HepG2 (cell line): ENCODE measurements at regions of chr6 and their contacts with region 1.

Region 1: GRCh38 chr6:27838058-27838944 is 73.9 kb downstream of the OR2B2 start:
- DNase-seq: peak; percentile 100
- ATAC-seq: peak; percentile 87
- H3K4me3 ChIP-seq: peak overlapping the region; percentile 79 to 84 (median 83)
- H3K27ac ChIP-seq: peak overlapping the region; percentile 92
- H3K4me1 ChIP-seq: peaks cover 34% of the 10 kb centered on the region
- H3K27me3 ChIP-seq: no peaks in the 10 kb centered on the region; a peak in 1 of 5 replicates
- CTCF ChIP-seq: no peak
- EP300 ChIP-seq: 0 out of 4 replicates have a peak, but pooled peaks of 1 of the 2 experiments have one; percentile 6
- POLR2A ChIP-seq: peak; percentile 82 to 99
- RAD21 ChIP-seq: no peak; the same call in 1 of the 2 replicates

Region 2: GRCh38 chr6:26204332-26205165 is 1633.8 kb before region 1 on chr6:
- CTCF ChIA-PET with region 1: no interaction called
- POLR2A ChIA-PET with region 1: interaction called, 12 read pairs
- in situ Hi-C with region 1: loop called (anchors 10 kb)
- intact Hi-C with region 1: loop called (anchors 10 kb)
- DNase-seq: peak; percentile 98
- ATAC-seq: peak; percentile 75
- H3K4me3 ChIP-seq: peak overlapping the region; percentile 62 to 95 (median 77)
- H3K27ac ChIP-seq: peak overlapping the region; percentile 87
- H3K4me1 ChIP-seq: peaks cover 36% of the 10 kb centered on the region
- H3K27me3 ChIP-seq: no peaks in the 10 kb centered on the region; a peak in 1 of 5 replicates
- CTCF ChIP-seq: peak; percentile 53
- EP300 ChIP-seq: peak in 1 of 2 experiments; percentile 89; a peak in 3 of 4 replicates
- POLR2A ChIP-seq: peak; percentile 98 to 99
- RAD21 ChIP-seq: no peak; the same call in 1 of the 2 replicates

Region 3: GRCh38 chr6:27374824-27375612 is 463.3 kb before region 1 on chr6:
- CTCF ChIA-PET with region 1: no interaction called
- POLR2A ChIA-PET with region 1: no interaction called
- in situ Hi-C with region 1: no loop called
- intact Hi-C with region 1: no loop called
- DNase-seq: peak; percentile 31
- ATAC-seq: peak; percentile 96
- H3K4me3 ChIP-seq: peak overlapping the region; percentile 57 to 69 (median 59)
- H3K27ac ChIP-seq: no peak overlapping the region
- H3K4me1 ChIP-seq: peaks cover 16% of the 10 kb centered on the region; the same call in 1 of the 2 replicates
- H3K27me3 ChIP-seq: peaks cover 0 to 8% of the 10 kb centered on the region in 2 experiments
- CTCF ChIP-seq: no peak
- EP300 ChIP-seq: no peak
- POLR2A ChIP-seq: no peak
- RAD21 ChIP-seq: no peak

Region 4: DNA sequence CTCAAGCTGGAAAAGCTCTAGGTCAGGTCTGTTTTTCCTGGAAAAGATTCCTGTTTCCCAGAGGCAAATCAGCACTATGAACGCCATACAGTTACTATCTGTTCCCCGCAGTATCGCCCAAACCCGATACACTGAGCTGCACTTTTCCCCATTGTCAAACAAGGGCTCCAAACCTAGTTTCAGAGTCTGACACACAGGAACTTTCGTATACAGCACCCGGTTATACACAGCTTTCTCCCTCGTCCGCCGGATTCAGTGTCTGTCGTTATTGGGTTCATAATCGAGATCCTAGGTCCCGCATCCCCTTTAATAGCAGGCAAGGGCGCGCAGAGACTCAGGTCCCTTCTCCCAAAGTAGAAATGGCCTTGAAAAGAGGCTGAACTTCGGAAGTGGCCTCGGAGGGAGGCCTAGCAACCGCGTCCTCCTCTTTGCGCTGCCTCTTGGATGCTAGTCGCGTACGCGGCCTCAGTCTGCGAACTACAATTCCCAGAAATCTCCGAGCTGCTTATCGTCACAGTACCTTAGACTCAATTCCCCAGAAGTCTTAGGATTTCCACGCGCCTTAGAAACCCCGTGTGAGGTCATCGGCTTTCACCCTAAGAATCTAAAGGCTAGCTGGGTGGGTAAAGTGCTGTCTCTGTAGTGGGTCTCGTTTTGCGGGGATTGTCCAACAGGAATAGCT is 415.5 kb before region 1 on chr6:
- CTCF ChIA-PET with region 1: no interaction called
- POLR2A ChIA-PET with region 1: no interaction called
- in situ Hi-C with region 1: no loop called
- intact Hi-C with region 1: no loop called
- DNase-seq: no peak
- ATAC-seq: no peak
- H3K4me3 ChIP-seq: no peak overlapping the region
- H3K27ac ChIP-seq: no peak overlapping the region
- H3K4me1 ChIP-seq: no peaks in the 10 kb centered on the region
- H3K27me3 ChIP-seq: peaks cover 2 to 6% of the 10 kb centered on the region in 2 experiments; a peak in 1 of 5 replicates
- CTCF ChIP-seq: no peak
- EP300 ChIP-seq: no peak
- POLR2A ChIP-seq: no peak
- RAD21 ChIP-seq: no peak

Region 5: DNA sequence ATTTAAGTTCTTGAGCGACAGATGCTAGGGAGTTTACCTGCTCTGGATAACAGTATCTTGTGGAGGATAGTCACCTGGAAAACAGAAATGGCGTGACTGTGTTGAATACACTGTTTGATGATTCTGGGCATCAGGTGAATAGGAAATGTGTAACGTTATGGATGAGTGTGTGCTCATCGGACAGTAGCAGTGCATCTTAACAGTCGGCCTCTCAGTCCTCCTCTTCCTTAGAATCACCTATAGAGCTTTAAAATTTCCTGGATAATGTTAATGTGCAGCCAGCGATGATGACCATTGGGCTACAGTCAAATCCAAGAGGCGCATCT is 143.8 kb before region 1 on chr6:
- CTCF ChIA-PET with region 1: no interaction called
- POLR2A ChIA-PET with region 1: no interaction called
- in situ Hi-C with region 1: no loop called
- intact Hi-C with region 1: no loop called
- DNase-seq: no peak
- ATAC-seq: no peak; the same call in 1 of the 3 replicates
- H3K4me3 ChIP-seq: peak overlapping the region; percentile 61 to 93 (median 90)
- H3K27ac ChIP-seq: peak overlapping the region; percentile 71
- H3K4me1 ChIP-seq: peaks cover 27% of the 10 kb centered on the region
- H3K27me3 ChIP-seq: no peaks in the 10 kb centered on the region; a peak in 1 of 5 replicates
- CTCF ChIP-seq: no peak
- EP300 ChIP-seq: no peak
- POLR2A ChIP-seq: no peak
- RAD21 ChIP-seq: no peak

Region 6: GRCh38 chr6:27825025-27825793 is 13.1 kb before region 1 on chr6:
- CTCF ChIA-PET with region 1: no interaction called
- POLR2A ChIA-PET with region 1: interaction called, 80 read pairs
- in situ Hi-C with region 1: no loop called
- intact Hi-C with region 1: no loop called
- DNase-seq: no peak
- ATAC-seq: peak; percentile 11; the same call in 2 of the 3 replicates
- H3K4me3 ChIP-seq: peak overlapping the region; percentile 66 to 88 (median 75)
- H3K27ac ChIP-seq: peak overlapping the region; percentile 78
- H3K4me1 ChIP-seq: peaks cover 33% of the 10 kb centered on the region
- H3K27me3 ChIP-seq: no peaks in the 10 kb centered on the region; a peak in 1 of 5 replicates
- CTCF ChIP-seq: no peak
- EP300 ChIP-seq: no peak
- POLR2A ChIP-seq: no peak
- RAD21 ChIP-seq: no peak

Region 7: DNA sequence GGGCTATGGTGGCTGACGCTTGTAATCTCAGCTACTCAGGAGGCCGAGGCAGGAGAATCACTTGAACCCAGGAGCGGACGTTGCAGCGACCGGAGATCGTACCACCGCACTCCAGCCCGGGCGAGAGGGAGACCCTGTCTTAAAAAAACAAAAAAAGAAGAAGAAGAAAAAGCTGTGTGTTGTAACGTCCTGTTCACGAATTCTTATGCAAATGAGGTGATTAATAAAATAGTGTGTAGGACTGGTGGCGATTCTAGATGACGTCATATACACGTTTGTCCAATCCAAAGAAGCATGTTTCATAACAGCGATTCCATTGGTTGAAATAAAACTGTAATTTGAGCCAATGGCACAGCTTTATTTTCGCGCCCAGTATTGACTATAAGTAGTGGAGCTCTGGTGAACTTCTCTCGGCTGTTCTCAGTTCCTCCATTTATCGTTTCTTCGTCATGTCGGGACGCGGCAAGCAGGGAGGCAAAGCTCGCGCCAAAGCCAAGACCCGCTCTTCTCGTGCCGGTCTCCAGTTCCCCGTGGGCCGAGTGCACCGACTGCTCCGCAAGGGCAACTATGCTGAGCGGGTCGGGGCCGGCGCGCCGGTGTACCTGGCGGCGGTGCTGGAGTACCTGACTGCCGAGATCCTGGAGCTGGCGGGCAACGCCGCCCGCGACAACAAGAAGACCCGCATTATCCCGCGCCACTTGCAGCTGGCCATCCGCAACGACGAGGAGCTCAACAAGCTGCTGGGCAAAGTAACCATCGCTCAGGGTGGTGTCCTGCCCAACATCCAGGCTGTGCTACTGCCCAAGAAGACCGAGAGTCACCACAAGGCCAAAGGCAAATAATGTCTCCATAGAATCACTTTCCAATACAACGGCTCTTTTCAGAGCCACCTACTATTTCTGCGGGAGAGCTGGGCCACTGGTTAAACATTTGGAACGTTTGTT is 26.9 kb after region 1 on chr6:
- CTCF ChIA-PET with region 1: no interaction called
- POLR2A ChIA-PET with region 1: interaction called, 64 read pairs
- in situ Hi-C with region 1: no loop called
- intact Hi-C with region 1: loop called (anchors 2 kb)
- DNase-seq: peak; percentile 73
- ATAC-seq: peak; percentile 64
- H3K4me3 ChIP-seq: peak overlapping the region; percentile 52 to 70 (median 65)
- H3K27ac ChIP-seq: peak overlapping the region; percentile 9
- H3K4me1 ChIP-seq: peaks cover 38% of the 10 kb centered on the region
- H3K27me3 ChIP-seq: peaks cover 0 to 31% of the 10 kb centered on the region in 2 experiments; a peak in 3 of 5 replicates
- CTCF ChIP-seq: no peak
- EP300 ChIP-seq: no peak
- POLR2A ChIP-seq: peak; percentile 53 to 57; a peak in 3 of 4 replicates
- RAD21 ChIP-seq: no peak